Cardiac septum (tissue), 1 donor: ENCODE measurements at regions of chr4 and their contacts with region 1.

Region 1: DNA sequence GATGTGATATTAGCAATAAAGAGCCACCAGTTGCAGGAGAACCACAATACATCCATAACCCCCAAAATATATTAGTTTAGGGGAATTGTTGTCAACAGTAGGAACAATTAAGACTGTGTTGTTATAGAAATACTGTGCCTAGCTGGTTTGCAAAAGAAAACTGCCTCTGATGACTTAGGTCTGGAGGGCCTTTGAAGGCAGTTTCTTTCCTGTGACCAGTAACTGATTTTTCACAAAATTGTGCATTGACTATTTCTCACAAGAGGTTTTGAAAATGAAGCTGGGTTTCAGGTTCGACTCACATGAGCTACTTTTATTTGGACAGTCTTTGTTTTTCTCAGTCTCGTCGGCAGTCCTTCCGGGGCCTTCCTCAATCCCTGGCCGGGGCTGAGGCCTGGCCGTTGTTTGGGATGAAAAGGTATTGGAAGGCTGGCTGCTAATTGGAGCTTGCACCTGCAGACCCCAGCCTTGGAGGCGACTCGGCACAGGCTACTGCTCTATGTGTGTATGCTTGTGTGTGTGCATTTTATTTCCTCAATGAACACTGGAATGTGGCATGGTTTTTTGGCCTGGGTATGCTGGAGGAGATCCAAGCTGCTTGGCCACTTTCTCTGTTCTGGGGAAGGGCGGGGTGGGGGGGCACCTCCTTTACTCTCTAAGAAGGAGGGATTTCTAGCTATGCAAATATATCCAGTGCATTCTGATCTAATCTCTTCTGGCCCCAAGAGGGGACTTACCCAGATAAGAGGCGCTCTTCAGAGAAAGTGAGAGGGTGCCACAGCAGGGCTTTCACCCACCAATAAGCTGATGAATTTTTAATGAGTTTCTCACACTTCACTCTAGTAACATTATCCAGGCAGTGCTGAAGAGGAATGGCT is 49.5 kb upstream of the LNX1 start:
- DNase-seq: no peak

Region 2: DNA sequence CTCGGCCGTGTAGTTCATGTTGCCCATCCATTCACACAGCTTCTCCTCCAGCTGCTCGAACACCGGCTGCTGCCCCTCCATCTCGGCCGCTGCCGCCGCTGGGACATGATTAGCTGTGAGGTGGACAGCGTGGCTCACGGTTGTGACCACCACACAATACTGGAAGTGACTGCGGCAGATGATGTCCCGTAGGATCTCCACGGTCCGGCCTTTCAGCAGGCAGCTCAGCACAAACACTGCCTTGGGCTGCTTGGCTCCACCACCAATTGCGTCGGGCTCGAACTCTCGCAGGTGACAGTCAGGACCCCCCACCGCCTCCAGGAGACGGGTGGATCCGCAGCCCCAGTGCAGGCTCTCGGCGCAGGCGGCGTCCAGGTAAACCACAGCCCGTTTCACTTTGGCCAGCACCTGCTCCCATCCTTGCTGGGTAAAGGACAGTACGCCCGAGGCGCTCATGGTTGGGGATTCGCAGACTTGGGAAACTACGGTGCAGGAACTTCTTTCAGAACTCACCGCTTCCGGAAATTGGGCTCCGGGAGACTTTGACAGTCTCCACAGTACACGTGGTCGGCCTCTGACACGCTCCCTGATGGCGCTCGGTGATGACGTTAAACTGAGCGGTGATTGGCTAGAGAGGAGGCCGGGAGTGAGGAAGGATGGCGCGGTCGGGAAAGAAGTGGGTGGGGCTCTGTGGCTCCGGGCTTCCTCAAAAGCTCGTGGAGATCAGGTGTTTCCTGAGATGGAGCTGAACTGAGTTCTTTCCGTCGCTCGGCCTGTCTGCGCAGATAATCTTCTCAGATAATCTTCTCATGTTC is 275.1 kb before region 1 on chr4 and contains the start of gene SCFD2:
- intact Hi-C with region 1: no loop called
- DNase-seq: peak; percentile 98
- total RNA-seq, gene SCFD2: 9.7 TPM

Region 3: DNA sequence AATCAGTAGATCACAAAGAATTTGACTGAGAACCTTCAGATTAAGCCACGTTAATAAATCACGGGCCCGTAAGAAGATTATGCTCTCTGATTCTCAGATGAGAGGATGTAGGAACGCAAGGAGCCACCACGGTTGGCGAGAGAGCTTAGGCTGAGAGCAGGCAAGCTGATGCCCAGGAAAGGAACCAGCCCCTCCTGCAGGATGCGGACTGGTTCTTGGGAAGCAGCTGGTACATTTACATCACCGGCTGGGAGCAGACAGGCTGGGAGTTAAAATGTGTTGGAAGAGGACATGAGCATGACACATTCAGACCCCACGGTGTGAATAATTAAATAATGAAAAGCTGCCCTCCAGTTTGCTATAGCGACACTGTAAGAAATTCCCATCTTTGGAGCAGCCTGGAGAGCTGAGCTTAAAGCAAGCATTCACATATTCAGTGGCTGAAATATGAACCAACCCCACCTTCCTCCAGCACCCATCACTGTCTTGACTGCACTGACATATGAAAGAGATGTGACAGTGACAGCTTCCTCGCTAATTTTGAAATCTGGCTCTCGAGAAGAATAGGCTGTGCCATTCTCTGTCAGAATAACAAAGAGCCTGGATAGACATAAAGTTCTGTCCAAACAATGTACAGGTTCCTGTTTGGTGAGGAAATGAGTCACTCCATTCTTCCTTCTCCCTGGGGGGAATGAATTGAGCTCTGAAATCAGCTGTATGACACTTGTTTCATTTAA is 82.6 kb before region 1 on chr4:
- intact Hi-C with region 1: loop called (anchors 10 kb)
- DNase-seq: no peak